PC-9 (cell line): ENCODE measurements at regions of chr6 and their contacts with region 1.

Region 1: DNA sequence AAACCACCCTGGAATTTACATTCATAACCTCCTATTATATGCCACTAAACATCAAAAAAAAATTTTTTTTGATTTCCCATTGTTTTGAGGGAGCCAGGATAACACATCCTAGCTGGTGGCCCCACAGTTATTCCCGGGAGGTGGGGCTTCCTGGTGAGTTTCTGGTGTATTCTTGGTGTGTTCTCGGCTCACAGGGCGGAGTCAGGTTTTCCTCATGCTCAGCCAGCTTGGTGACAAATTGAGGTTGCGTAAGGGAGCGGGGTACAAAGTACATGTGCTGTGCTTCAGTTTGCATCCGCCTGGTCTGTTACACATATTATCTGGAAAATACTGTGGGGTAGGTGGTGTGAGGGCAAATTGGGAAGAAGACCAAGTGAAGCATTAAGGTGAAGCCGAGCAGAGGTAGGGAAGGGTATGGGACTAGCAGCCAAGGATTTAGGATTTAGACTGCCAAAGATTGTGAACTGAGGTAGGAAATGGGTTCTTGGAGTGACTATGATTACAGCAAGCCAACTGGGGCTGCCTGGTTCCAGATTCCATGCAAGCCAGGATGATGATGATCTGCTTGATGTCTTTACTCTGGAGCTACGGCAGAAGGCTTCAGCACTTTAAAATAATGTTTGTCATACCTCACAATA is 46.2 kb upstream of the EEF1A1 start:
- DNase-seq: peak; percentile 55 to 75
- H3K4me3 ChIP-seq: no peak overlapping the region
- H3K27ac ChIP-seq: no peak overlapping the region
- H3K4me1 ChIP-seq: peaks cover 22% of the 10 kb centered on the region
- H3K27me3 ChIP-seq: no peaks in the 10 kb centered on the region
- CTCF ChIP-seq: no peak

Region 2: GRCh38 chr6:73537677-73538076 is 29.4 kb before region 1 on chr6:
- CTCF ChIA-PET with region 1: interaction called, 12 read pairs
- POLR2A ChIA-PET with region 1: no interaction called
- intact Hi-C with region 1: no loop called
- DNase-seq: no peak
- H3K4me3 ChIP-seq: no peak overlapping the region
- H3K27ac ChIP-seq: no peak overlapping the region
- H3K4me1 ChIP-seq: no peaks in the 10 kb centered on the region
- H3K27me3 ChIP-seq: no peaks in the 10 kb centered on the region
- CTCF ChIP-seq: no peak

Region 3: DNA sequence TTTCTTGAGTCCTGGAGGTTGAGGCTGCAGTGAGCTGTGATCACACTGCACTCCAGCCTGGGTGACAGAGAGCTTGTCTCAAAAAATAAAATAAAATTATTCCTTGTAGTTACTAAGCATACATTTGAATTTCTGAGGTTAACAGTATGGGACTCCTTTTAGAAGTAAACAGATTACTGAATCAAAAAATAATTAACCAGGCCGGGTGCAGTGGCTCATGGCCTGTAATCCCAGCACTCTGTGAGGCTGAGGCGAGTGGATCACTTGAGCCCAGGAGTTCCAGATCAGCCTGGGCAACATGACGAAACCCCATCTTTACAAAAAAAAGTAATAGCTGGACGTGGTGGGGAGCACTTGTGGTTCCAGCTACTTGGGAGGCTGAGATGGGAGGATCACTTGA is 24.2 kb before region 1 on chr6:
- CTCF ChIA-PET with region 1: interaction called, 11 read pairs
- POLR2A ChIA-PET with region 1: no interaction called
- intact Hi-C with region 1: no loop called
- DNase-seq: no peak
- H3K4me3 ChIP-seq: no peak overlapping the region
- H3K27ac ChIP-seq: no peak overlapping the region
- H3K4me1 ChIP-seq: no peaks in the 10 kb centered on the region
- H3K27me3 ChIP-seq: no peaks in the 10 kb centered on the region
- CTCF ChIP-seq: no peak